GM10248 (cell line): ENCODE measurements at regions of chr17 and their contacts with region 1.

Region 1: GRCh38 chr17:75173526-75173925 is 9.2 kb downstream of the SUMO2 start:
- DNase-seq: no peak
- CTCF ChIP-seq: no peak

Region 2: GRCh38 chr17:75154195-75155106 is 19.1 kb before region 1 on chr17 and contains the start of gene JPT1:
- CTCF ChIA-PET with region 1: interaction called, 12 read pairs
- POLR2A ChIA-PET with region 1: interaction called, 4 read pairs
- DNase-seq: peak; percentile 99
- CTCF ChIP-seq: no peak

Region 3: DNA sequence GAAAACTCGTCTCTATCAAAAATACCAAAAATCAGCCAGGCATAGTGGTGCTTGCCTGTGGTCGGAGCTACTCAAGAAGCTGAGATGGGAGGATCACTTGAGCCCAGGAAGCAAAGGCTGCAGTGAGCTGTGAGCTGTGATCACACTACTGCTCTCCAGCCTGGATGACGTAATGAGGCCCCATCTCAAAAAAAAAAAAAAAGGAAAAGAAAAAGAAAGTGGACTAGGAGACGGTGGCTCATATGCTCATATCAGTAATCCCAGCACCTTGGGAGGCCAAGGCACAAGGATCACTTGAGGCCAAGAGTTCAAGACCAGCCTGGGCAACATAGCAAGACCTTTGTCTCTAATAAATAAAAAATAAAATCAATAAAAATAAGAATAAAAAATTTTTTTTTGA is 18.1 kb after region 1 on chr17:
- CTCF ChIA-PET with region 1: interaction called, 16 read pairs
- POLR2A ChIA-PET with region 1: no interaction called
- DNase-seq: no peak
- CTCF ChIP-seq: no peak